Activated CD4-positive, alpha-beta T cell treated with anti-CD3 and anti-CD28 coated beads for 36 hours (primary cell): ENCODE measurements at regions of chr22 and their contacts with region 1.

Region 1: DNA sequence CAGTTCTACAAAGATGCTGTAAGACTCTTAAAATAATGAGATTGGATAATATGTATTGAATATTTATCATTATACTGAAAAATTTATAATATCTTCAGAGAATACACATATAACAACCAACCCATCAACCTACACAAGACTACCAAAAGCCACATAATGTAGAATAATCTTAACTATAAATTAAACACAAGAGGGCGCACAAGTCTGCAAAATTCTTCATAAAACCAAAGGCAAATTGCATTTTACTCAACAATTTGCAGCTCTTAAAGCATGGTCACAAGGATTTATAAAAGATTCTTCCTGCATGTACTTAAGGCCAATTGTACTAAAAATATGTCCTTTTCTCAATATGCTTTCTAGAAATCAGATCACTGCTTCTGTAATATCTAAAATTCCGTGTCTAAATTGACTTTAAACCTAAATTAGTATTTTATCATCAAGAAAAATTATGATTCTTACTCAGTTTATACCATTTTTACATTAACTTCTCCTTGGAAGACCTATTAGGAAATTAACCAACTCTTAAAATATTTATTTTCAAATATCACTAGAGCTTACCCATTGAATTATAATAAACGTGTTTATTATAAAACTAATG is 79.0 kb downstream of the TTC28 start:
- DNase-seq: peak; percentile 6
- ATAC-seq: no peak
- H3K4me3 Mint-ChIP-seq: no peak overlapping the region
- H3K27ac Mint-ChIP-seq: no peak overlapping the region
- H3K4me1 Mint-ChIP-seq: no peaks in the 10 kb centered on the region
- H3K27me3 Mint-ChIP-seq: peaks cover 5% of the 10 kb centered on the region

Region 2: GRCh38 chr22:28488825-28489224 is 111.8 kb before region 1 on chr22:
- CTCF ChIA-PET with region 1: no interaction called
- POLR2A ChIA-PET with region 1: no interaction called
- intact Hi-C with region 1: no loop called
- DNase-seq: no peak
- ATAC-seq: no peak
- H3K4me3 Mint-ChIP-seq: no peak overlapping the region
- H3K27ac Mint-ChIP-seq: no peak overlapping the region
- H3K4me1 Mint-ChIP-seq: no peaks in the 10 kb centered on the region
- H3K27me3 Mint-ChIP-seq: peaks cover 18% of the 10 kb centered on the region

Region 3: DNA sequence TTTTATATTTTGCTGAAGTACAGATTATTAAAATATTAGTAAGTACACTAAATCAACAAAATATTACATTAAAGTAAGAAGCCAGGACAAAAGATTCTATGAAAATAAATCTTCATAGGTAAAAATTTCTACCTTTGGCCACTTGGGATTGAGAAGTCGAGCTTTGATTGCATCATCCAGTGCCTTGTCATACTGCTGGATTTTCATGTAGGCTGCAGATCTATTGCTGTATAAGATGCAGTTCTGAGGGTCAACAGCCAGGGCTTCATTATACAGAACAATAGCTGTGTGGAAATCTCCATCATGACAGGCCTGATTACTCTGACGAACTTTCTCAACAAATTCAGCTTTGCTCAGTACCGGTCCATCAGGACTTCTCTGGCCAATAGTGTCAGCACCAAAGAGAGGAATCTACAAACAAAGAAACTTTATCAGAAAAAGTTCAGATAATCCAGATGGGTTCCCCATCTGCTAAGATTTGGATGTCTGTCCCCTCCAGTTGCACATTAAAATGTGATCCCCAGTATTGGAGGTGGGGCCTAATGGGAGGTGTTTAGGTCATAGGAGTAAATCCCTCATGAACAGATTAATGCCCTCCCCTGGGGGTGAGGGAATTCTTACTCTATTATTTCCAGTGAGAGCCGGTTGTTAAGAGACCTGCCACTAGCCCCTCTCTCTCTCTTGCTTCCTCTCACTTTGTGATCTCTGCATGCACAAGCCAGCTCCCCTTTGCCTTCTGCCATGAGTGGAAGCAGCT is 29.0 kb after region 1 on chr22:
- CTCF ChIA-PET with region 1: no interaction called
- POLR2A ChIA-PET with region 1: no interaction called
- intact Hi-C with region 1: no loop called
- DNase-seq: no peak
- ATAC-seq: no peak
- H3K4me3 Mint-ChIP-seq: no peak overlapping the region
- H3K27ac Mint-ChIP-seq: no peak overlapping the region
- H3K4me1 Mint-ChIP-seq: no peaks in the 10 kb centered on the region
- H3K27me3 Mint-ChIP-seq: peaks cover 23% of the 10 kb centered on the region

Region 4: DNA sequence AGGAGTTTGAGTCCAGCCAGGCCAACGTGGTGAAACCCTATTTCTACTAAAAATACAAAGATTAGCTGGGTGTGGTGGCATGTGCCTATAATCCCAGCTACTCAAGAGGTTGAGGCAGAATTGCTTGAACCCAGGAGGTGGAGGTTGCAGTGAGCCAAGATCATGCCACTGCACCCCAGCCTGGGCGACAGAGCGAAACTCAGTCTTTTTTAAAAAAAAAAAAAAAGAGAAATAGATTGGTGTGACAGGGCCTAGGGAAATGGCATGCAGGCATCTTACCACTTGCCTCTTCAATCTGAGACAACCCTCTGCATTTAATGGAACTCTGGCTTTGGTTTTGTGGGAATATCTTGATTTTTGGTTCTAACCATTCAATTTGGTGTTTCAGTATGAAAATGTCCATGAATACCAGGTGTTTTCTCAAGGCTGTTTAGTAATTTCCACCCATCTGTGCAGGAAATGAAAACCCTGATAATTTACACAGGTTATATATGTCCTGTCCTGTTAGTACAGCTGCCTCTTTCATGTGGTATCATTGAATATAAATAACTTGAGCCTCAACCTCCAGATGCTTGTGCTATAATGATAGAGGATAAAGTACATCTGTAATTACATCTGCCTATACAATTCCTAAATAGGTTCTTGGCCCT is 191.3 kb after region 1 on chr22:
- CTCF ChIA-PET with region 1: interaction called, 10 read pairs
- POLR2A ChIA-PET with region 1: no interaction called
- intact Hi-C with region 1: no loop called
- DNase-seq: no peak
- ATAC-seq: peak; percentile 11
- H3K4me3 Mint-ChIP-seq: no peak overlapping the region
- H3K27ac Mint-ChIP-seq: no peak overlapping the region
- H3K4me1 Mint-ChIP-seq: peaks cover 45% of the 10 kb centered on the region
- H3K27me3 Mint-ChIP-seq: no peaks in the 10 kb centered on the region

Region 5: DNA sequence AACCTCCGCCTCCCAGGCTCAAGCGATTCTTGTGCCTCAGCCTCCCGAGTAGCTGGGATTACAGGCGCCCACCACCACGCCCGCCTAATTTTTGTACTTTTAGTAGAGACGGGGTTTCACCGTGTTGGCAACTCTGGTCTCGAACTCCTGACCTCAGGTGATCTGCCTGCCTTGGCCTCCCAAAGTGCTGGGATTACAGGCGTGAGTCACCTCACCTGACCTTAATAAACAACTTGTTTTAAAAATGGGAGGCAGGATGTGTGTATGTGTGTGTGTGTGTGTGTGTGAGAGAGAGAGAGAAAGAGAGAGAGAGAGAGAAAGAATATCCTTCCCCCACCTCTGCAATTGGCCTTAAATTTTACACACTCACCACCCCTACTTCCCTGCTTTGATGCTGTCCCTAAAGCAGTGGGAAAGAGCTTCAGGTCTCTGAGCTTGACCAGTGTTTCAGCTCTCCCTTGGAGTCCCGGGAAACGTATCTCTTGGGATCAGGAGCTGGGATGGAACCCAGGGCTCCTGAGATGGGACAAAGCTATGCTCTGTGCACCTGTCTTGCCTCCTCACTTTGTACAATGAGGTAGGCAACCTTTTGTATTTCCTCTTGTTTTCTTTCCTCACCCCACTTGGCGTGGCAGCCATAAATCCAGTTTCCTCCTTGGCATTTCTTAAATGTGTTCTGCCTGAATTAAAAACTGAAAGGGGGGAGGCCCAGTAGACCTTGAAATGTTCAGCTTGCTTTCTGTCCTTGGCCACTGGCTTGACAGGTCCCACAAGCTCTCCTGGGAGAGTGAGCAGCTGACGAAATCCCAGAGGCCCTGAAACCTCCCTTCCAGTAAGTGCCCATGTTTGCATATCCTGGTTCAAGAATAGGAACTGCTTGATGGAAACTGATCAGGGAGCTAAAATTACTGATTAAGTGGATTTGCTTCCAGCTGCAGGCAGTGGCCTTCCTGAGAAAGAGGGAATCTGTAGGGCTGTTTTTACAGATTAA is 217.6 kb after region 1 on chr22:
- CTCF ChIA-PET with region 1: interaction called, 11 read pairs
- POLR2A ChIA-PET with region 1: no interaction called
- intact Hi-C with region 1: no loop called
- DNase-seq: peak; percentile 16
- ATAC-seq: no peak
- H3K4me3 Mint-ChIP-seq: no peak overlapping the region
- H3K27ac Mint-ChIP-seq: peak overlapping the region; percentile 29
- H3K4me1 Mint-ChIP-seq: peaks cover 43% of the 10 kb centered on the region
- H3K27me3 Mint-ChIP-seq: no peaks in the 10 kb centered on the region

Region 6: DNA sequence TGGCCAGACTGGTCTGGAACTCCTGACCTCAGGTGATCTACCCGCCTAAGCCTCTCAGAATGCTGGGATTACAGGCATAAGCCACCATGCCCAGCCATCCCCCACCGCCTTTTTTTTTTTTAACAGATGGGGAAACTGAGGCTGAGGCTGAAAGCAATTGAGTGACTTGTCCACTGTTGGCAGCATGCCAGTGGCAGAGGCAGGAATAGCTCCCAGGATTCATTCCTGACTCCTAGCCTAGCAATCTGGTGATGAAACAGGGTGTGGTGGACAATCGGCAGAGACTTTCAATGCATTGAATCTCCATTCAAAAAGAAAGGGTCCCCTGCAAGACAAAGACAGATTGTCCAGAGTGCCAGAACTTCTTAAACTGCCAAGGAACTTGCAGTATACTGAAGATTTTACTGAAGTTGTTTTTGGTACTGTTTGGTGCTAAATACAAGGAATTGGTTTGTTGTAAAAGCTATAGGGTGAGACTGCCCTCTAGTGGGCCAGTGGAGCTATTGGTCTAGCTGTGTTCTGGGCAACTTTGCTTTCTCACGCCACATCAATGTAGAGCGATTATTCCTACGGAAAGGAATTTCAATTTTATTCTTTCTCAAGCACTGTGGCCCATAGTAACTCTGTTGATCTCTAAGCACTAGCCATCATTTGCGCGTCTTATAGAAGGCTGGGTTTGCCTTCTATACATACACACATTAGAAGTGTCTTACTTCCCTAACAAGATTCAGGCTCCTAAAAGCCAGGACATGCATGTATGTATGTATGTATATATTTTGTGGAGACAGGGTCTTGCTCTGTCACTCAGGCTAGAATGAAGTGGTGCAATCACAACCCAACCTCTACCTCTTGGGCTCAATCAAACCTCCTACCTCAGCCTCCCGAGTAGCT is 440.0 kb after region 1 on chr22:
- CTCF ChIA-PET with region 1: interaction called, 28 read pairs
- POLR2A ChIA-PET with region 1: no interaction called
- intact Hi-C with region 1: loop called (anchors 1 to 2 kb)
- DNase-seq: peak; percentile 77
- ATAC-seq: peak; percentile 65
- H3K4me3 Mint-ChIP-seq: no peak overlapping the region
- H3K27ac Mint-ChIP-seq: no peak overlapping the region
- H3K4me1 Mint-ChIP-seq: no peaks in the 10 kb centered on the region
- H3K27me3 Mint-ChIP-seq: peaks cover 7% of the 10 kb centered on the region

Region 7: GRCh38 chr22:29154364-29155048 is 553.9 kb after region 1 on chr22:
- CTCF ChIA-PET with region 1: interaction called, 5 read pairs
- POLR2A ChIA-PET with region 1: no interaction called
- intact Hi-C with region 1: loop called in 1 of 2 experiments (anchors 10 kb)
- DNase-seq: peak; percentile 88
- ATAC-seq: peak; percentile 86
- H3K4me3 Mint-ChIP-seq: no peak overlapping the region
- H3K27ac Mint-ChIP-seq: no peak overlapping the region
- H3K4me1 Mint-ChIP-seq: peaks cover 6% of the 10 kb centered on the region
- H3K27me3 Mint-ChIP-seq: peaks cover 18% of the 10 kb centered on the region